ENCODE measurements at regions of chr3 and their contacts with region 1.

Region 1: GRCh38 chr3:195162033-195162669 is 108.8 kb downstream of the XXYLT1 start:
- H3K4me3 Mint-ChIP-seq: no peak overlapping the region
- H3K27ac Mint-ChIP-seq: peak overlapping the region; percentile 71
- H3K4me1 Mint-ChIP-seq: peaks cover 91% of the 10 kb centered on the region
- H3K27me3 Mint-ChIP-seq: no peaks in the 10 kb centered on the region

Region 2: DNA sequence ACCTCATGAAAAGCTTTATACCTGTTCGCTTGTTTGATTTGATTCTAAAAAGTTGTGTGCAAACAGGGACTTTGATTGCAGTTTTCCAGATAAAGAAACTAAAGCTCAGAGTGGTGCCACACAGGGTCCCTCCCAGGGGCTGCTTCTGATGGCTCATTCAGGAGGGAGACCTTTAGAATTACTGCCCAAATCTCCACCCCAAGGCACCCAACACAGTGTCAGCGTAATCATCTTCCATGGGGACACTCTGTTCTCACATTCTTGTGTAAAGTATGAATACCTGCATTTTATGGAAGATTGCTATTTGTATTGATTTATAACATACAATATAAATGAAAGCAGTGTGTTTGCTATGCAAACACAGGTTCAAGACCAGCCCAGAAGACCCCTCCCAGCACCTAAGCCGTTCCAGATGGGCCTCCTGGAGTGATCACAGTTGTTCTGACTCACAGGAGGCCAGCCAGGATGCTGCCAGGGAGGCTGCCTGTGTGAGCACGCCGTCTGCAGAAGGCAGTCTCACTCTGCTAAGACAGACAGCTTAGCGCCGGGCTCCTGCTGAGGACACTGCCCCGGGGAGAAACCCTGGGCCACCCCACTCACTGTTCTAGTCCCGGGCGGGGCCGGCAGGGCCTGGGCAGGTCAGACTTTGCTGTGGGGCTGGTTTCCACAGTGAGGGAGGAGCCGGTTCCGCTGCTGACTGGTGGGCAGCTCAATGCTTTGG is 290.8 kb before region 1 on chr3:
- intact Hi-C with region 1: no loop called
- H3K4me3 Mint-ChIP-seq: peak overlapping the region; percentile 47
- H3K27ac Mint-ChIP-seq: peak overlapping the region; percentile 92
- H3K4me1 Mint-ChIP-seq: peaks cover 62% of the 10 kb centered on the region
- H3K27me3 Mint-ChIP-seq: peaks cover 6% of the 10 kb centered on the region

Region 3: DNA sequence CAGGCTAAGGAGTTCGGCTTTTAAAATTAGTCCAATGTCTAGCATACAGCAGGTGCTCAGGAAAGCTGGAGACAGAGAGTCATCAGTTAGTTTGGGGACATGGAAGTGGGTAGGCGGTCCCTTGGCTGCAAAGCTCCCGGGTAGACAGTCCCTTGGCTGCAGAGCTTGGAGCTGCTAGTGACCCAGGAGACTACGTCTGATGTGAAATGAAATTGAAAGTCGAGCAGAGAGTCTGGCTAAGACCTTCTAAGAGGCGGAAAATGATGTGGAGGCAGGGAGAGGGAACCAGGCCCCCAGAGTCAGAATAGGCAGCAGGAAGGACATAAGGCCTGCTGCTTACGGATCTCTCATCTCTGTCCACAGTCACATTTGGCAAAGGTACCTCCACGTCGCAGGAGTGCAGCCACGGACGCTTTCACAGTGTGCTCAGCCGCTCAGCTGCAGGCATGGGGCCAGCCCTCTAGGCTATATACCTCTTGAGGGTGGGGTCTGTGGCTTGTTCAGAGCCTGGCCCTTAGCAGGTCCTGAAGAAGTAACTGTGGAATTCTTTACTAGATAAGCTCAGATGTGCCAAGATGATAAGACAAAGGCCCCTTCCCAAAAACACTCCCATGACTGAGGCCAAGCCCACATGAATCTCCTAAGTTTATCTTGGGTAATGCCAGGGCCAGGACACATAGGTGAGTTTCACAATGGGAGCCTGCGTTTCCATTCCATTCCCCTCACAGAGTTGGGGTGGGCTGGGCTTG is 22.9 kb before region 1 on chr3:
- intact Hi-C with region 1: no loop called
- H3K4me3 Mint-ChIP-seq: no peak overlapping the region
- H3K27ac Mint-ChIP-seq: no peak overlapping the region
- H3K4me1 Mint-ChIP-seq: peaks cover 10% of the 10 kb centered on the region
- H3K27me3 Mint-ChIP-seq: no peaks in the 10 kb centered on the region

Region 4: DNA sequence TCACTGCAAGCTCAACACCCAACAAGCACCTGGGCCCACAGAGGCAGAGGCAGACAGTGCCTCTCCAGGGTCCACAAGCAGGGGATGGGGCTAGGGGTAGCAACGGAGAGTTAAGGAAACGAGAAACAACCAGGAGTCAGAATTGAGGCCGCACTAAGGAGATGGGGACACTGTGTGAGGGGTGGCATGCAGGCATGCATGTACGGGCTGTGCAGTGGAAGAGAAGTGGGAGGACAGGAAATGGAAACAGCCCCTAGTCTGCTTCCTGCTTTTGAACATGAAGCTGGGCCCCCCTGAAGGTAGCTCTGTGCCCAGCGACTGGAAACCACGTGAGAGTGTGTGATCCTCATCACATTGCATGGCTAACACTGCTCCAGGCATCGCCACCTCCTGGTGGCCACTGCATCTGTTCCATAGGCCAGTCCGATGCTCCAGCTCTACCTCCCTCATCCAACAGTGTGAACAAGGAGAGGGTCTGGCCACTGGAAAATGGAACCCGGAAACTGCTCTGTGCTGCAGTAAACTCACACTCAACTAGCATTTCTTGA is 64.8 kb after region 1 on chr3:
- intact Hi-C with region 1: loop called (anchors 10 kb)
- H3K4me3 Mint-ChIP-seq: no peak overlapping the region
- H3K27ac Mint-ChIP-seq: no peak overlapping the region
- H3K4me1 Mint-ChIP-seq: peaks cover 34% of the 10 kb centered on the region
- H3K27me3 Mint-ChIP-seq: no peaks in the 10 kb centered on the region